ENCODE measurements at regions of chr14 and their contacts with region 1.

Region 1: DNA sequence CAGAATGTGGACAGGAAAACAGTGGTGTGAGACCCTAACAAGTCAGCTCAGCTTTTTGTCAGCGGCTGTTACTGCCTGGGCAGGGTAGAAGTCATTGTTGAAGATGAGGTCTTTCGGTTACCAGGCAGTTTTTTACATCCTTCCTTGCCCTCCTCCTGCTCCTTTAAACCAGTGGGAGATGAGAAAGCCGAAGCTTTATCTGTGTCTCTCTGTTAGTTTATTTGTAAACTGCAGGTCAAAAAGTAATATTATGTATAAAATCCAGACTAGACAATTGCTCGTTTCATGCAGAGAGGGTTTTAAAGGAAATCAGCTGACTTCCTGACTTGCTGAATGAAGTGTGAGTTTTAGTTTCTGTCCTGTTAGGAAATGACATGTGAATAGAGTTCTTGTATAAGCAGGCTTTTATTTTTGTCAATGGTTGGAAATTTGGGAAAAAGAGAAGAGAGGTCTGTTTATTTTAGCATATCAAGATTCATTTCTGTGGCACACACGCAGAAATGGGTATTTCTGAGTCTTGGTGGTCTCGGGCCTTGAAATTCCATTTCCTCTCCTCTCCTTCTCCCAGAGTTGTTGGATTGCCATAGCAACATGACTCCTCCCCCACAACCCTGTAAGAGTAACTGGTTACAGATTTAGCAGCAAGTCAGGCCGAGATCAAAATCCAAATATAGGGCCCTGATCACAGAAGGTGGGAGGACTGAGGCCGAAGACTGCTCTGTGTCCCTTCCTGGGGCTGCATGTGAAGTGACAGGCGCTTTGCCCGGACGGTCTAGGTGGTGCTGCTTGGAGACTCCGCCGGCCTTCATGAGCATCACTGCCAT is 60.8 kb downstream of the SAMD4A start:
- DNase-seq: peak; percentile 62
- H3K4me3 Mint-ChIP-seq: peak overlapping the region; percentile 61
- H3K27ac Mint-ChIP-seq: peak overlapping the region; percentile 86
- H3K4me1 Mint-ChIP-seq: peaks cover 57% of the 10 kb centered on the region
- H3K27me3 Mint-ChIP-seq: no peaks in the 10 kb centered on the region

Region 2: DNA sequence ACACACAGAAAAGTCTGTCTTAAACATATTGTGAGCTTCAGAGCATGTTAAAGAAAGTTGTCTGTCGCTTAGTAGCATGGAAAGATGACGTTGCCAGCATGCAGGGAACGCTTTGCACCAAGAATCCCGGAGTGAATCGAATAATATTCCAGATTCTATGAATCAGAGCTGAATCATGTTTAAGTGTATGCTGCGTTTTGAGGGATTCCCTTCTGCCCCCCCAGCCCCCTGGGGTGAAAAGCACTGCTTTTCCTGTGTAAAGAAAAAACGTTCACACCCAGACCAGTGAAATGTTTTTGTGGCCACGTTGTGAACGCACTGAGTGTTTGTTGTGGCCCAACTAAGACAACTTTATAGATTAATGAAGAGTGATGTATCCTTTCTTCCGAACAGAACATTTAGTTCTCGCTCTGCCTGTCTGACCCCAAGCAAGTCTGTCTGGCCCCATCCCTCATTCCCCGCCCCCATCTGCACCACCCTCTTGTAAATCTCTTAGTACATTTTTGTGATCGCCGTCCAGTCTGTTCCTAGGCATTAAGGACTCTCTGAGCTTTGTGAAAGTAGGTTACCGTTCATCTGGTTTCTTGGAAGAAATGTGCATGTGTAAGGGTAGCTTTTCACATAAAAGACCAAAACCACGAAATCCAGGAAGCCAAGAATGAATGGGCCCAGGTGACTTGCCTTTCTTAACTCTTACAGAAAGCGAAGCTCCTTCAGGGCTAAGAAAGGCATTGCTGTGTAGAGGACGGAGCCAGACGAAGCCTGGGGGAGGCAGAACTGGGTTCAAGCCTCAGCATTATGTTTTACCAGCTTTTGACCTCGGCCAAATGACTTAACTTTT is 42.2 kb after region 1 on chr14:
- CTCF ChIA-PET with region 1: no interaction called
- intact Hi-C with region 1: loop called (anchors 1 kb)
- DNase-seq: peak; percentile 51
- H3K4me3 Mint-ChIP-seq: no peak overlapping the region
- H3K27ac Mint-ChIP-seq: no peak overlapping the region
- H3K4me1 Mint-ChIP-seq: peaks cover 30% of the 10 kb centered on the region
- H3K27me3 Mint-ChIP-seq: peaks cover 6% of the 10 kb centered on the region

Measured in activated naive CD4-positive, alpha-beta T cell treated with anti-CD3 and anti-CD28 coated beads for 36 hours (primary cell).